T-cell (primary cell): ENCODE measurements at regions of chr15 and their contacts with region 1.

Region 1: GRCh38 chr15:51907136-51907914 is 64.3 kb downstream of the LEO1 start:
- DNase-seq: no peak
- ATAC-seq: no peak
- H3K4me3 ChIP-seq: no peak overlapping the region
- H3K4me3 Mint-ChIP-seq: no peak overlapping the region
- H3K27ac ChIP-seq: no peak overlapping the region
- H3K27ac Mint-ChIP-seq: no peak overlapping the region
- H3K4me1 ChIP-seq: no peaks in the 10 kb centered on the region
- H3K4me1 Mint-ChIP-seq: no peaks in the 10 kb centered on the region
- H3K27me3 ChIP-seq: no peaks in the 10 kb centered on the region
- H3K27me3 Mint-ChIP-seq: no peaks in the 10 kb centered on the region

Region 2: DNA sequence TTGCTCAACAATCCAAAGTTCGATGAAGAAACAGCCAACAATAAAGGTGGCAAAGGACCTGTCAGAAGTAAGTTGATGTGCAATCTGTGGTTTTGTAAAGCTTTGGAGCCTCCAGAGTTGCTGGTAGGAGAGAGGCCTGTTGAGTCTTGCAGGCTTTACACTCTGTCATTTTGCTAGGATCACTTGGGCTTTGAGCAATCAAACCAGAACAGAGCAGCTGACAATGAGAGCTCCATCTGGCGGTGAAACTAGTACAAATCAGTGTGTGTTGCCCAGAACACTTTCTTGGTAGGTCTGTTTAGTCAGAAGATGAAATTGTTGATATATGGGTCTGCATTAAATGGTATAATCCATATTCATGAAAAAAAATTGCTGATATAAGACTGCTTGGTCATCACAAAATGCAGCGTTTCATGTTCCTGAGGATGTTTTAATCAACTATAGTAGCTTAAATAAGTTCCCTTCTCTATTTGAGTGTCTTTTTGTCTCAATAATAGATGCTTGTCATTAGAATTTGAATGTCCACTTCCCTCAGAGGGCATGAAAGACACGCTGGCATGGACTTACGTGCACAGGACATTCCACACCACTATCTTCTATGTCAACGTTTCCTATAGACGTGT is 130.3 kb before region 1 on chr15:
- CTCF ChIA-PET with region 1: no interaction called
- POLR2A ChIA-PET with region 1: no interaction called
- DNase-seq: peak; percentile 5 to 84 (median 49)
- ATAC-seq: peak; percentile 54 to 83 (median 77)
- H3K4me3 ChIP-seq: no peak overlapping the region
- H3K4me3 Mint-ChIP-seq: no peak overlapping the region
- H3K27ac ChIP-seq: no peak overlapping the region
- H3K27ac Mint-ChIP-seq: no peak overlapping the region
- H3K4me1 ChIP-seq: no peaks in the 10 kb centered on the region
- H3K4me1 Mint-ChIP-seq: peaks cover 5 to 8% (median 6%) of the 10 kb centered on the region in 3 donors
- H3K27me3 ChIP-seq: no peaks in the 10 kb centered on the region
- H3K27me3 Mint-ChIP-seq: no peaks in the 10 kb centered on the region

Region 3: GRCh38 chr15:51883438-51883837 is 23.9 kb before region 1 on chr15:
- CTCF ChIA-PET with region 1: interaction called, 7 to 13 read pairs
- POLR2A ChIA-PET with region 1: no interaction called
- DNase-seq: no peak
- ATAC-seq: no peak
- H3K4me3 ChIP-seq: no peak overlapping the region
- H3K4me3 Mint-ChIP-seq: no peak overlapping the region
- H3K27ac ChIP-seq: no peak overlapping the region
- H3K27ac Mint-ChIP-seq: peak overlapping the region; percentile 16 to 44
- H3K4me1 ChIP-seq: peaks cover 0 to 2% of the 10 kb centered on the region in 2 experiments
- H3K4me1 Mint-ChIP-seq: peaks cover 15 to 31% (median 22%) of the 10 kb centered on the region in 3 donors
- H3K27me3 ChIP-seq: no peaks in the 10 kb centered on the region
- H3K27me3 Mint-ChIP-seq: no peaks in the 10 kb centered on the region

Region 4: GRCh38 chr15:52709190-52709981 is 802.1 kb after region 1 on chr15:
- CTCF ChIA-PET with region 1: no interaction called
- POLR2A ChIA-PET with region 1: interaction called in 1 of 2 experiments, 17 read pairs
- DNase-seq: peak in 1 of 35 experiments; percentile 5
- ATAC-seq: no peak
- H3K4me3 ChIP-seq: no peak overlapping the region
- H3K4me3 Mint-ChIP-seq: peak overlapping the region in 1 of 3 donors; percentile 66
- H3K27ac ChIP-seq: no peak overlapping the region
- H3K27ac Mint-ChIP-seq: no peak overlapping the region
- H3K4me1 ChIP-seq: no peaks in the 10 kb centered on the region
- H3K4me1 Mint-ChIP-seq: no peaks in the 10 kb centered on the region
- H3K27me3 ChIP-seq: no peaks in the 10 kb centered on the region
- H3K27me3 Mint-ChIP-seq: no peaks in the 10 kb centered on the region